ENCODE measurements at regions of chr20 and their contacts with region 1.

Region 1: DNA sequence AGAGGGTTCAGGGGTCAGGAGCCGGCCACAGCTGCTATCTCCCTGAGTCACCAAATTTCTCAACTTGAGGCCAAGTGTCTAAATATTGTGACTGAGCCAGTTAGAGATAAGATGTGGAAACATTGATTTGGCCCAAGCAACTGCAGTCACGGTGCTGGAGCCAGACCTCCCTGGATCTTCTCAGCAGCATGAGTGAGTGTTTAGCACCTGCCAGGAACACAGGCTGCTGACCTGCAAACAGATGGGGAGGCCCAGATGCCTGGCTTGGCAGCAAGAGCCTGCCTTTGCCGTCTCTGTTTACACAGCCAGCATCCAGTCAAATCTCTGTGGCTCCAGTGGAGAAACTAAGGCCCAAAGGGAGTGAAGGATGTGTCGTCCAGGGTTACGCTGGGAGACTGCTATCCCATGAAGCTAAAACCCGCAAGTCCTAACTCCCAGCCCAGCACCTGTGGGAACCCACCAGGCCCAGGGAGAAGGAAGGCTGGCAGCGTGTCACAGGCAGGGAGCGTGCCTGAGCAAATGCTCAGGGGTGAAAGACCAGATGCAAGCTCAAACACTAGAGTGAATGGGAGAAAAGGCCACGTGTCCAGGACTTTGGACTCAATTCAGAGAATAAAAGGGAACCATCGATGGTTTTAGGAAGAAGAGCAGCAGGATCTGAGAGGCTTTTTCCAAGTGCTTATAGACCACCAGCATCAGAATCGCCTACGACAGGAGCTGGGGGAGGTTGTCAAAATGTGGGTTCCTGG is 15.9 kb upstream of the PTGIS start:
- DNase-seq: no peak
- H3K4me3 Mint-ChIP-seq: no peak overlapping the region
- H3K27ac Mint-ChIP-seq: peak overlapping the region; percentile 60
- H3K4me1 Mint-ChIP-seq: peaks cover 24% of the 10 kb centered on the region
- H3K27me3 Mint-ChIP-seq: peaks cover 21% of the 10 kb centered on the region

Region 2: GRCh38 chr20:49384437-49385088 is 199.3 kb before region 1 on chr20:
- CTCF ChIA-PET with region 1: no interaction called
- POLR2A ChIA-PET with region 1: no interaction called
- DNase-seq: peak; percentile 74
- H3K4me3 Mint-ChIP-seq: no peak overlapping the region
- H3K27ac Mint-ChIP-seq: peak overlapping the region; percentile 21
- H3K4me1 Mint-ChIP-seq: peaks cover 2% of the 10 kb centered on the region
- H3K27me3 Mint-ChIP-seq: peaks cover 5% of the 10 kb centered on the region

Region 3: DNA sequence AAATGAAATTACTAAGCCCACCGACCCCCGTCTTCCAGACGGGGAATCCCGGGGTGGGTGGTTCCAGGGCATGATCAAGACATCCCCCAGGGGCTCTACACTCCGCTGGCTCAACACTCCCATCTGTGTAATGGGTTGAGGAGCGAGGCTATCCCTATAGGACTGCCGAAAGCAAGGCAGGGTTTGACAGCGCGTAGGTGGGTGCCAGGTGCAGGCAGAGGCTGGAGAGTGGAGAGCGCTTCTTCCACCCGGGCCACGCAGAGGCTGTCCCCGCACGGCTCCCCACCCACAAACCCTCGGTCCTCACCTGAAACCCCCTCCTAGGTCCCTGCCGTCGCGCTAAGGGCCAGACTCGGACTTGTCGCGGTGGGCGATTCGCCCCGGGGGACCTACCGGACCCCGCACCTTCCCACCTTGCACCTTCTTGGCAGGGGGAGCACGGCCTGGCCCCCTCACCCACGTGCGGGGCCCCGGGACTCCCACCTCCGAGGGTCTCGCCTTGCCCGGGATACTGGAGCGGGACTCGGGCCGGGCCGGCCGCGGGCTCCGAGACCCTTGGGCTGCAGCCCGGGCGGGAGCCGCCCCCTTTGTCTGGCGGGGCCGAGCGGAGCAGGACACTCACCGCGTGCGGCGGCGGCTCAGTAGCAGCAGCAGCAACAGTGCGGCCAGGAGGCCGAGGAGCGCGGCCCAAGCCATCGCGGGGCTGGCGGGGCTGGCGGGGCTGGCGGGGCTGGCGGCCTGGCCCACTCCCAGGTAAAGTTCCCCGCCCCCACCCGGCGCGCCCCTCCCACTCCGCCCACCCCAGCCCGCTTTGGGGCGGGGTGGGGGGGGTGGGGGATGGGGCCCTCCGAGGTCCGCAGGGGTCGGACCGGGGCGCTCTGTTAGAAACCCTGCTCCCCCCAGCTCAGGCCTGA is 16.2 kb before region 1 on chr20 and contains the start of gene PTGIS:
- CTCF ChIA-PET with region 1: interaction called, 11 read pairs
- POLR2A ChIA-PET with region 1: no interaction called
- DNase-seq: no peak
- H3K4me3 Mint-ChIP-seq: no peak within 1 kb of the TSS
- H3K27ac Mint-ChIP-seq: no peak within 1 kb of the TSS
- H3K4me1 Mint-ChIP-seq: peaks cover 20% of the 10 kb centered on the region
- H3K27me3 Mint-ChIP-seq: peaks cover 58% of the 10 kb centered on the region
- total RNA-seq, gene PTGIS: 0.40 to 0.62 TPM

Region 4: GRCh38 chr20:49594143-49594930 is 10.5 kb after region 1 on chr20:
- CTCF ChIA-PET with region 1: interaction called, 16 read pairs
- POLR2A ChIA-PET with region 1: interaction called, 3 read pairs
- DNase-seq: peak; percentile 82
- H3K4me3 Mint-ChIP-seq: peak overlapping the region; percentile 74
- H3K27ac Mint-ChIP-seq: peak overlapping the region; percentile 92
- H3K4me1 Mint-ChIP-seq: peaks cover 88% of the 10 kb centered on the region
- H3K27me3 Mint-ChIP-seq: peaks cover 2% of the 10 kb centered on the region

Measured in activated CD4-positive, alpha-beta T cell treated with anti-CD3 and anti-CD28 coated beads, Interleukin-2, amount 10 ng/mL, durations not matched to agents 7 days and 5 days (primary cell).